ENCODE measurements at regions of chr6 and their contacts with region 1.

Region 1: GRCh38 chr6:134979142-134979541 is 29.2 kb upstream of the ALDH8A1 start:
- DNase-seq: peak; percentile 77
- ATAC-seq: peak; percentile 86
- H3K4me3 Mint-ChIP-seq: no peak overlapping the region
- H3K27ac Mint-ChIP-seq: peak overlapping the region; percentile 73
- H3K4me1 Mint-ChIP-seq: peaks cover 54% of the 10 kb centered on the region
- H3K27me3 Mint-ChIP-seq: no peaks in the 10 kb centered on the region
- CTCF ChIP-seq: no peak

Region 2: GRCh38 chr6:134950482-134950881 is 28.7 kb before region 1 on chr6:
- CTCF ChIA-PET with region 1: no interaction called
- POLR2A ChIA-PET with region 1: no interaction called
- intact Hi-C with region 1: no loop called
- DNase-seq: no peak
- ATAC-seq: no peak
- H3K4me3 Mint-ChIP-seq: no peak overlapping the region
- H3K27ac Mint-ChIP-seq: no peak overlapping the region
- H3K4me1 Mint-ChIP-seq: peaks cover 2% of the 10 kb centered on the region
- H3K27me3 Mint-ChIP-seq: no peaks in the 10 kb centered on the region
- CTCF ChIP-seq: no peak

Region 3: GRCh38 chr6:135323202-135323668 is 344.1 kb after region 1 on chr6:
- CTCF ChIA-PET with region 1: no interaction called
- POLR2A ChIA-PET with region 1: no interaction called
- intact Hi-C with region 1: loop called (anchors 5 kb)
- DNase-seq: peak; percentile 38
- ATAC-seq: peak; percentile 90
- H3K4me3 Mint-ChIP-seq: peak overlapping the region; percentile 26
- H3K27ac Mint-ChIP-seq: peak overlapping the region; percentile 76
- H3K4me1 Mint-ChIP-seq: peaks cover 17% of the 10 kb centered on the region
- H3K27me3 Mint-ChIP-seq: no peaks in the 10 kb centered on the region
- CTCF ChIP-seq: no peak